Activated CD8-positive, alpha-beta T cell treated with anti-CD3 and anti-CD28 coated beads for 36 hours (primary cell): ENCODE measurements at regions of chr5 and their contacts with region 1.

Region 1: DNA sequence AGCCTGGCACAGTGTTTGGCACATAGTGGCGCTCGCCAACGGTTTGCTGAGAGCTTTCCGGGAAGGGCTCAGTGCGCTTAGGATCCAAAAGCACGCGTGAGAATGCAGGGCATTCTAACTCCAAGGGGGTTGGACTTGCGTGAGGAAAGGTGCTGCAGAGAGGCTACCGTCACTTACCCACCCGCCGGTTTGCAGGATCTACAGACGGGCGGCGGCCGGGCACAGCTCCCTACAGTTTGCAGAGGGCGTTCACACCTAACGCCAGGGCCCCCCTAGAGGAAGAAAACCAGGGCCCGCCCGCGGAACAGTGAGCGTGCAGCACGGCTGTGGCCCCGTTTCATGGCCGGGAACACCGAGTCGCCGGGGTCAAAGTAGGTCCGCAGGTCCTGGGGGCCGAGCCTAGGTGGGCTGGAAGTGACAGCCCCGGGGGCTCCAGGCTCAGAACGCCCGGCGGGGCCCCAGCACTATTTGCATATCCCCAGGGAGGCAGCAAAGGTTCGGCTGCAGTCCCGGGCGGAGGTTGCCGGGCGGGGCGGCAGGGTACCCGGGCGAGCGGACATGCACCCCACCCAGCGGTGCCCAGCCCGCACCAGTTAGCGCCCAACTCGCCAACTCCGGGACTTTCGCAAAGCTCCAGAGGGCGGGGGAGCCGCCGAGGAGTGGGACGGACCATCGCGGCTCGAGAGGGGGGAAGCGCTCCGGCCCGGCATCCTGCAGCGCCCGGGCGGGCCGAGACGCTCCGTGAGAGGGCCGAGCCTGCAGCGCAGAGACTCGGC is 526 bp upstream of the GALNT10 start:
- DNase-seq: peak; percentile 78
- ATAC-seq: peak; percentile 85
- H3K4me3 Mint-ChIP-seq: peak overlapping the region; percentile 75
- H3K27ac Mint-ChIP-seq: peak overlapping the region; percentile 43
- H3K4me1 Mint-ChIP-seq: peaks cover 28% of the 10 kb centered on the region
- H3K27me3 Mint-ChIP-seq: peaks cover 7% of the 10 kb centered on the region
- CTCF ChIP-seq: peak; percentile 66

Region 2: DNA sequence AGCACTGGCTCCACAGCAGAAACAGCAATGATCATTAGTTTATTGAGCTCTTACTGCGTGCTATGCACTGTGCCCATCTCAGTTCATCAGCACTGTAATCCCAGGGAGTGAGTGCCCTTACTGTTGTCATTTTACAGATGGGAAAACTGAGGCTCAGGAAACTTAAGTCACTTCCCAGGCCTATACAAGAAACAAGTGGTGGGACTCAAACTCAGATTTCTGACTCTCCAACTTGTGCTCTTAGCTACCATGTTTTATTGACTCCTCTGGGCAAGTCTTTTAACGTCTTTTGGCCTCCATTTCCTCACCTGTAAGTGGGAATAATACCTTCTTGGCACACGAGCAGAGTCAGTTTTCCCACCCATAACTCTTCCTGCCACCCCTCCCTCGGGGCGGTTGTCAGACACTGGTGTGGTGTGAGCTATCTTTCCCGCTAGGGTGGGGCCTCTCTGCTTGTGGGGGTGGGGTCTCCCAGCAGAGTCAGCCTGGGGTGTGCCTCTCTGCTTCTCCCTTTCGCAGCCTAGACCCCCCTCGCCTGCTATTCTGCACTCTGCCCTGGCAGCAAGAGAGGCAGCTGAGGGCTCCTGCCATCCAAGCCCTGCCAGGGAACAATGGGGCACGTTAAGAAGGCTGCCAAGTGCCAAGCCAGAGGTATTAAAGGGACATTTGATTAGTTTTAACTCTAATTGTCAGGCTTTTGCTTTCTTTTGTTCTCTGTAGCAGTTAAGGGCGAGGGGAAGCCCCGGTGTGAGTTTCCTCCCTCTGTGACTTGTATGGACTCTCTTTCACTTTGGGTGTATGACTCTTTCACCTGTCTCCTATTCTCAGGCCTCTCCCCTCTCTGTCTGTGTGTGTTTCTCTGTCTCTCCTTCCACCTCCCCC is 12.6 kb after region 1 on chr5:
- CTCF ChIA-PET with region 1: interaction called, 14 read pairs
- POLR2A ChIA-PET with region 1: interaction called, 18 read pairs
- intact Hi-C with region 1: no loop called
- DNase-seq: peak; percentile 81
- ATAC-seq: peak; percentile 83
- H3K4me3 Mint-ChIP-seq: peak overlapping the region; percentile 64
- H3K27ac Mint-ChIP-seq: peak overlapping the region; percentile 90
- H3K4me1 Mint-ChIP-seq: peaks cover 67% of the 10 kb centered on the region
- H3K27me3 Mint-ChIP-seq: no peaks in the 10 kb centered on the region
- CTCF ChIP-seq: no peak

Region 3: GRCh38 chr5:154238776-154239481 is 48.9 kb after region 1 on chr5:
- CTCF ChIA-PET with region 1: interaction called, 12 read pairs
- POLR2A ChIA-PET with region 1: interaction called, 7 read pairs
- intact Hi-C with region 1: no loop called
- DNase-seq: no peak
- ATAC-seq: no peak
- H3K4me3 Mint-ChIP-seq: no peak overlapping the region
- H3K27ac Mint-ChIP-seq: no peak overlapping the region
- H3K4me1 Mint-ChIP-seq: peaks cover 35% of the 10 kb centered on the region
- H3K27me3 Mint-ChIP-seq: no peaks in the 10 kb centered on the region
- CTCF ChIP-seq: no peak